ENCODE measurements at regions of chr3 and their contacts with region 1.

Region 1: DNA sequence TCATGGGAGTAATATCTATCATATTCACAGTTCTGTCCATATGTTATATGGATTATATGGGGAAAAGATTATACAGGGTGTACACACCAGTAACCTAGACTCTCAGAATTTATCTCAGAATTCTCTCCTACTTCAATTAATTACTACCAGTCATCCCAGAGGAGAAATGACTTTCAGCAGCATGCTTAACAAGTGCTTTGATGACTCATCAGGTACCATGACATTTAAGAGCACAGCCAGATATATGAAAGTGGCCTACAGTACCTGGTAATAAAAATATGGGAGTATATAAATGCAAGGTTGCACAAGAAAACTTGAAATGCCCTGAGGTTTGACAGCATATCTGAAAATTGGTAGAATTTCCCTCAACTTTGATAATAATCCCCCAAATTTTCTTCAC is 1273.0 kb downstream of the OTOL1 start:
- DNase-seq: no peak
- H3K4me3 ChIP-seq: no peak overlapping the region
- H3K27ac ChIP-seq: no peak overlapping the region
- H3K4me1 ChIP-seq: no peaks in the 10 kb centered on the region
- H3K27me3 ChIP-seq: no peaks in the 10 kb centered on the region
- CTCF ChIP-seq: no peak

Region 2: GRCh38 chr3:162933656-162934055 is 164.1 kb after region 1 on chr3:
- intact Hi-C with region 1: loop called (anchors 10 kb)
- DNase-seq: no peak
- H3K4me3 ChIP-seq: no peak overlapping the region
- H3K27ac ChIP-seq: no peak overlapping the region
- H3K4me1 ChIP-seq: no peaks in the 10 kb centered on the region
- H3K27me3 ChIP-seq: no peaks in the 10 kb centered on the region
- CTCF ChIP-seq: no peak

Region 3: DNA sequence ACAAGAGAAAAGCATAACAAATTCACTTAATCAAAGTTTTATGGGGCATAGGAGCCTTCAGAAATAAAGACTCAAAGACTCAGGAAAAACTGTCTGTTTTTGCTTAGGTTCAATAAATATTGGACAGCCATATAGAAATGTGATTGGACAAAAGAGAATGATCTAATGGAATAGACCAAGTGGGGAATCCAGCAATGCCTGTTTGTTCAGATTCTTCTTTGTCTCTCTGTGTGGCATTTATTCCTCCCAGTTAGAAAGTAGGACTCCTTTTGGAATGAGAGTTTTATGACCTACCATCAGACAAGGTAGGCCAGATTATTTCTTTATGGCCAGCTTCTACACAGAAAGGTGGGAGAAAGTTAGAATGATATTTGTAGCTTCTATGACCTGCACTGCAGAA is 187.2 kb after region 1 on chr3:
- intact Hi-C with region 1: no loop called
- DNase-seq: no peak
- H3K4me3 ChIP-seq: no peak overlapping the region
- H3K27ac ChIP-seq: no peak overlapping the region
- H3K4me1 ChIP-seq: no peaks in the 10 kb centered on the region
- H3K27me3 ChIP-seq: no peaks in the 10 kb centered on the region
- CTCF ChIP-seq: no peak

Measured in colonic mucosa (tissue), 4 donors.